ENCODE measurements at regions of chr2 and their contacts with region 1.

Region 1: DNA sequence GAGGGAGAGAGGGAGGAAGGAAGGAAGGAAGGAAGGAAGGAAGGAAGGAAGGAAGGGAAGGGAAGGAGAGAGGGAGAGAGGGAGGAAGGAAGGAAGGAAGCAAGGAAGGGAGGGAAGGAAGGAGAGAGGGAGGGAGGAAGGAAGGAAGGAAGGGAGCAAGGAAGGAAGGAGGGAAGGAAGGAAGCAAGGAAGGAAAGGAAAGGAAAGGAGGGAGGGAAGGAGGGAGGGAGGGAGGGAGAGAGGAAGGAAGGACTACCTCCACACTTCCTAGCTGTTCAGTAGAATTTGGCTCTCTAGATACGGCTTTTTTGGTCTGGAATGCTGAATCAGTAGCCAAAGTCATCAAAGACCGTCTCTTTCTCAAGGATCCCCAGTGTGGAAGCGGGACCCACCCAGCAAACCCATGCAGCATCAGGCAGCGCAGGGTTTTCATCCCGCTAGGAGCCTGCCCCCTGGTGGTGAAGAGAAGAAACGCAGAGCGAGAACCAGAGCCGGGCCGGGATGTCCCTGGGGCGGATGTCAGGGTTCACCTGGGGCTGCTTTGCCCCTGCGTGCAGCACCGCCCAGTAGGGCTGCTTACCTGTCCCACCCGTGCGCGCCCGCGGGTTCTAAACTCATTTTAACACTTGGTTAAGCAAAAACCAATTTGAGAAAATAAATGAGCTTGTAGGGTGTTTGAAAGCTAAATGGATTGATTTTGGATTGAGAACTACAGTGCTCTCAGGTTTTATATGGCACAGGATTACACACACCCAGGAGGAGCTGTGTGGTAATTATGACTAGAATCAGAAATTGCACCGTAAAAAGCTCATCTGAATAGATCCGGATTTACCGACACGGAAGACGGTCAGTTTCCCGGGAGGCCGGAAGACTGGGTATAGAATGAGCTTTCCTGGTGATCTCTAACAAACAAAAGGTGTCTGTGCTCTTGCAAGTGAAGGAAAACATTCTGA is 48.1 kb upstream of the ARL4C start:
- DNase-seq: peak; percentile 56 to 86 (median 79)
- ATAC-seq: peak; percentile 95
- H3K4me3 ChIP-seq: no peak overlapping the region
- H3K4me3 Mint-ChIP-seq: no peak overlapping the region
- H3K27ac ChIP-seq: no peak overlapping the region
- H3K27ac Mint-ChIP-seq: no peak overlapping the region
- H3K4me1 ChIP-seq: no peaks in the 10 kb centered on the region
- H3K4me1 Mint-ChIP-seq: peaks cover 5% of the 10 kb centered on the region
- H3K27me3 ChIP-seq: no peaks in the 10 kb centered on the region
- H3K27me3 Mint-ChIP-seq: peaks cover 23% of the 10 kb centered on the region
- CTCF ChIP-seq: peak; percentile 83

Region 2: DNA sequence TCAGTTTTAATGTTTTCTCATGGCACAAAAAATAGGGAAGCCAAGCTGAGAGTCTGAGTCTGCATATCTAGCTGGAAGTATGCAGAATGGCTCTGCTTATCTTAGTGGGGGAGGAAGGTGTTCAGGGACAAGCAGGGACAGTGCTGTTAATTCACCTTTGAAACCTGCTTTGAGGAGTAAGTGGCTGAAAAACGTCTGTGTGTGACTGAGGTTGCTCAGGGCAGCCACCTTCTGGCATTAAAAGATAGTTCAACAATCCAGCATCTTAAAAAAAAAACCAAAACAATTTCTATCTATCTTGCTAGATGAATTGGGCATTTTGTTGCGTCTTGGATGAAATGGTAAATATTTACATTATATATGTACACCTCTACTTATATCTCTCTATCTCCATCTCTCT is 629.8 kb before region 1 on chr2:
- CTCF ChIA-PET with region 1: no interaction called
- POLR2A ChIA-PET with region 1: no interaction called
- intact Hi-C with region 1: no loop called
- DNase-seq: no peak
- ATAC-seq: no peak
- H3K4me3 ChIP-seq: no peak overlapping the region
- H3K4me3 Mint-ChIP-seq: no peak overlapping the region
- H3K27ac ChIP-seq: no peak overlapping the region
- H3K27ac Mint-ChIP-seq: no peak overlapping the region
- H3K4me1 ChIP-seq: no peaks in the 10 kb centered on the region
- H3K4me1 Mint-ChIP-seq: peaks cover 2% of the 10 kb centered on the region
- H3K27me3 ChIP-seq: peaks cover 0 to 8% of the 10 kb centered on the region in 2 experiments
- H3K27me3 Mint-ChIP-seq: peaks cover 29% of the 10 kb centered on the region
- CTCF ChIP-seq: no peak

Region 3: DNA sequence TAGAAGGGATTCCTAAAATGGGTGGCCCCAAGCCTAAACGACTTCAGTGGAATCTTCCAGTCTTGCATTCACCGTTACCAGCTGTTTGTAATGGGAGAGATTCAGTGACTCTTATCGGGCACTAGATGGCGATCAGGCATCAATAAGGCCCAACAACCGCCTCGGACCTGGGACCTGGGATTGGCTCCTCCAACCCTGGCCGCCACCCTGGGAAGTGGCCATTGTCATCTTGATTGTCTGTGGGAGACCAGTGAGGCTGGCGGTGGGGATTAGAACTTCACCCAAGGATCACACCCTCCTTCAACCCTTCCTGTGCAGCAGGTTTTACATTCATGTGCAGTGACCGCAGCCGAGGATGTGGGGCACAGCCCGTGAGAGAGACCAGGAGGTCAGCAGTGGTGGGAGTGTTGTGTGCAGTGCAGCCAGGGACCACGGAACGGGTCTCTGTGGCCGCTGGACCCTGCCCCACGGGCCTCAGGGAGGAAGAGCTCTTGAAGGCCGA is 409.2 kb before region 1 on chr2:
- CTCF ChIA-PET with region 1: interaction called, 23 read pairs
- POLR2A ChIA-PET with region 1: no interaction called
- intact Hi-C with region 1: loop called (anchors 1 kb)
- DNase-seq: peak; percentile 16 to 77 (median 48)
- ATAC-seq: peak; percentile 56
- H3K4me3 ChIP-seq: no peak overlapping the region
- H3K4me3 Mint-ChIP-seq: no peak overlapping the region
- H3K27ac ChIP-seq: no peak overlapping the region
- H3K27ac Mint-ChIP-seq: peak overlapping the region; percentile 64
- H3K4me1 ChIP-seq: peaks cover 25% of the 10 kb centered on the region
- H3K4me1 Mint-ChIP-seq: peaks cover 30% of the 10 kb centered on the region
- H3K27me3 ChIP-seq: no peaks in the 10 kb centered on the region
- H3K27me3 Mint-ChIP-seq: no peaks in the 10 kb centered on the region
- CTCF ChIP-seq: peak; percentile 62

Region 4: DNA sequence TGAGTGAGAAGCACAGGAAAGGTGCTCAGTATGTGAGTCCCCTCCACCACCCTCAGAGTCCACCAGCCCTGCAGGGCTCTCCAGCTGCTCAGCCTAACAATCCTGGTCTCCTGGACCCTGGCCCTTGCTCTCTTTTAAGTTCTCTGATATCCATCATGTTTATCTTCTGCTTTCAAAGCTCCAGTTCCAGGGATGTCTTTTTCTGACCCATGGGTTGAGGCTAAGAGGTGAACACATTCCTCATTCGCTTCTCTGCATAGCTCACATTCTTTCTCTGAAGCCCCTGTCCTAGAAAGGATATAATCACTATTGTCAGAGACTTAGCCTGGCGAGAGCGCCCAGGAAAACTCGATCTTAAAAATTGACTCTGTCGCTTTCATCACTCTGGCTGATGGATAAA is 134.4 kb before region 1 on chr2:
- CTCF ChIA-PET with region 1: no interaction called
- POLR2A ChIA-PET with region 1: no interaction called
- intact Hi-C with region 1: no loop called
- DNase-seq: no peak
- ATAC-seq: no peak
- H3K4me3 ChIP-seq: no peak overlapping the region
- H3K4me3 Mint-ChIP-seq: no peak overlapping the region
- H3K27ac ChIP-seq: no peak overlapping the region
- H3K27ac Mint-ChIP-seq: no peak overlapping the region
- H3K4me1 ChIP-seq: no peaks in the 10 kb centered on the region
- H3K4me1 Mint-ChIP-seq: peaks cover 31% of the 10 kb centered on the region
- H3K27me3 ChIP-seq: no peaks in the 10 kb centered on the region
- H3K27me3 Mint-ChIP-seq: no peaks in the 10 kb centered on the region
- CTCF ChIP-seq: no peak

Region 5: GRCh38 chr2:234533626-234534025 is 11.3 kb before region 1 on chr2:
- CTCF ChIA-PET with region 1: interaction called, 24 read pairs
- POLR2A ChIA-PET with region 1: no interaction called
- intact Hi-C with region 1: no loop called
- DNase-seq: no peak
- ATAC-seq: no peak
- H3K4me3 ChIP-seq: no peak overlapping the region
- H3K4me3 Mint-ChIP-seq: no peak overlapping the region
- H3K27ac ChIP-seq: no peak overlapping the region
- H3K27ac Mint-ChIP-seq: no peak overlapping the region
- H3K4me1 ChIP-seq: no peaks in the 10 kb centered on the region
- H3K4me1 Mint-ChIP-seq: no peaks in the 10 kb centered on the region
- H3K27me3 ChIP-seq: no peaks in the 10 kb centered on the region
- H3K27me3 Mint-ChIP-seq: peaks cover 8% of the 10 kb centered on the region
- CTCF ChIP-seq: no peak